ENCODE measurements at regions of chr17 and their contacts with region 1.

Region 1: GRCh38 chr17:64063766-64064224 is 43.4 kb upstream of the ICAM2 start:
- DNase-seq: peak; percentile 73
- H3K4me3 ChIP-seq: no peak overlapping the region
- H3K27ac ChIP-seq: no peak overlapping the region
- H3K4me1 ChIP-seq: peaks cover 22% of the 10 kb centered on the region
- H3K27me3 ChIP-seq: no peaks in the 10 kb centered on the region
- CTCF ChIP-seq: peak; percentile 60 to 71
- POLR2A ChIP-seq: no peak

Region 2: DNA sequence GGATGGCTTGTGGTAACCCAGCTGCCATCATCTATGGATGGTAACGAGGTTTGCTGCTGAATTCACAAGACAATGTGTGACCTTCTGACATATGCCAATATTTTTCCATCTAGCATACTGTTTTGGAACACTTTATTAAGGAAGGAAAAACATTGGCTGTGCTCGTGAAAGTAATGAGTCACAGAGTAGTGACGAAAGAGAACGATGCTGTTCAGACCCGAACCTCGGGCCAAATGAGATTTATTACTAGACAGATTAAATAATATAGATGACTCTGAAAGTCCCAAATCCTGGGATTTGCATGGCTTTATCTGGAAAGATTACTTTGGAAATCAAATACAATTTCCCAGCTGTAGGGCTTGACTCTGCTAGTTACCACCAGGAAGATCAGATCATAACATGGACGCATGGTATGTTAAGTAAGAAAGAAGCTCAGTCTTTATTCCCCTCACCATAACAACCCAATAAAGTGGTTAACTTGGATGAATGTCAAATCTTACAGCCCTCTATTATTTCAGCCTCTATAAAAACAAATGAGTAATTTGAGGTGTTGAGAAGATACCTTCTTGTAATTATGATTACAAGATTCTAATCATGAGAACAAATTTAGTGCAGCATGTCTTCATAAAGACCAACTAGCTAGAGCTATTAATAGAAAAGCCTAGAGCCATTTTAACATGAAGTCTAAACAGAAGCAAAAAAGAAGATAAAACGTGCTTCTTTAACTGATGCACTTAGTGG is 33.6 kb after region 1 on chr17:
- CTCF ChIA-PET with region 1: interaction called, 11 read pairs
- POLR2A ChIA-PET with region 1: no interaction called
- dilution Hi-C with region 1: no loop called
- intact Hi-C with region 1: no loop called
- DNase-seq: peak; percentile 97
- H3K4me3 ChIP-seq: no peak overlapping the region
- H3K27ac ChIP-seq: peak overlapping the region; percentile 83
- H3K4me1 ChIP-seq: peaks cover 26% of the 10 kb centered on the region
- H3K27me3 ChIP-seq: no peaks in the 10 kb centered on the region
- CTCF ChIP-seq: no peak
- POLR2A ChIP-seq: no peak

Region 3: DNA sequence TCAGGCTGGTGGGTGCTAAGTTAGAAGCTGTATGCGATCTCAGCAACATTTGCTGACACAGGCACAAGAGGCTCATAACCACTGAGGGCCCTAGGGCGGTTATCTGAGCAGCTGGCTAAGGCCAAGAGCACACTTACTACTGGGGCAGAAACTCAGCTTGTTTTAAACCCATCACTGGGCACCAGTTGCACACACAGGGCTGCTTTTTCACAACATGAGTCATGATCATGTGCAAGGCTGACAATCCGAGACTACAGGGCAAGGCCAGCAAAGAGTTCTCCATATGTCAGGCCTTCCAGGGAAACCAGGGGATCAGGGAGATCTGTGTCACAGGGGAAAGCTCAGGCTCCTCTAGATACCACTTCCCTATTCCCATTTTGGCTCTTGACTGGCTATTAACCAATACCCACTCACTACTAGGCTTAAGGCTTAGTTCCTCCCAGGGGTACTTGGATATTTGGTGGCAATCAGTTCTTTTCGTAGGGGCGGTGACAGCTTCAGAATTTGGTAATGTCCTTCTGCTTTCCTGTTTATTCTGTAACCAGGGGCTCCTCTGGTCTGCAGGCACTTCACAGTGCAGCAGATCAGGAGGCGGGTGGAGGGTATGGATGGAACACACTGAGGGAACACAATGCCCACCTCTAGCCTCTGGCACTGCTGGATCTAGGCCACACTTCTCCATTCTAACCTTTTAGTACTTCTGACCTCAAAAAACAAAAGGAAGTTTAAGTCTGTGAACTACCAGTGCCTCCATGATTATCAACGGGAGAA is 111.1 kb after region 1 on chr17:
- CTCF ChIA-PET with region 1: interaction called, 14 read pairs
- POLR2A ChIA-PET with region 1: interaction called, 3 read pairs
- dilution Hi-C with region 1: no loop called
- intact Hi-C with region 1: loop called (anchors 2 kb)
- DNase-seq: peak; percentile 67
- H3K4me3 ChIP-seq: no peak overlapping the region
- H3K27ac ChIP-seq: peak overlapping the region; percentile 19
- H3K4me1 ChIP-seq: peaks cover 40% of the 10 kb centered on the region
- H3K27me3 ChIP-seq: no peaks in the 10 kb centered on the region
- CTCF ChIP-seq: no peak
- POLR2A ChIP-seq: no peak

Measured in endothelial cell of umbilical vein (primary cell).